Caco-2 (cell line): ENCODE measurements at regions of chr17 and their contacts with region 1.

Region 1: DNA sequence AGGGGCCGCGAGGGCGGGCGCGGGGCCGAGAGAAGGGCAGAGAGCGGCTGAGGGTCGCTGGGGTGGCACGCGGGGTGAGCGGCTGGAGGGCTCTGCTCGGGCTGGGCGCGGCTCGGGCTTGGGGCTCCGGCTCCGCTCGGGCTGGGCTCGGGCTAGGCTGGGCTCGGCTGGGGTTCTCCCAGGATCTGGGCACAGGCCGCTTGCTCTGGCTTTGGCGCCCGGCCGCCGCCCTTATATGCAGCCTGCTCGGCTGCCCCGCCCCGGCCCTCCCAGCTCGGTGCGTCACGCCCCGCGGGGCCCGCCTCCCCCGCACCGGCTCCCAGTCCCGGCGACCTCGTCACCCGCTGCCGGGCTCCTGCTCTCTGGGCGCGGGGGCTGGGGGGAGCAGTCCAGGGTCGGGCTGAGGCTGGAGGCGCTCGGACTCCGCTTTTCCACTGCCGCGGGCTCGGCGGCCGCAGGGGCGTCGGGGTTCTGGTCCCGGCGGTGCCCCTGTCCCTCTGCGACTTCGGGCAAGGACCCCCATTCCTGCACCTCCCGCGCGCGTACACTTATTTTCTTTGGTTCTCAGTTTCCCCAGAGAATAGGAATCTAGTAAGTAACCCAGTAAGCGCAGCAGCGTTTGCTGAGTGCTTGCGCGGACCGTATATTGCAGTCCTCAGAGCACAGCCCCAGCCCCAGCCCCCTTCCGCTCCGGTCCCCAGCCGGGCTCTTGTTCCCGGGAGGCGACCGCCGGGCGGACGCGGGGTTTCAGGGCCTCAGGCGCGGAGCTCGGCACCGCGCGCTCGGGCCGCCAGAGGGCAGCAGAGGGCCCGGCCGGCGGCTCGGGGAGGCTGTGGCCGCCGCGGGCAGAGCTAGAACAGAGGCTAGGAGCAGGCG is at the start of gene RASD1:
- DNase-seq: peak; percentile 88 to 96
- H3K4me3 ChIP-seq: peak within 1 kb of the TSS; percentile 91
- H3K4me3 Mint-ChIP-seq: peak within 1 kb of the TSS; percentile 92
- H3K27ac Mint-ChIP-seq: peak within 1 kb of the TSS; percentile 74
- H3K4me1 ChIP-seq: peaks cover 4% of the 10 kb centered on the region; the same call in 1 of the 2 replicates
- H3K4me1 Mint-ChIP-seq: peaks cover 12% of the 10 kb centered on the region
- H3K27me3 ChIP-seq: no peaks in the 10 kb centered on the region
- H3K27me3 Mint-ChIP-seq: no peaks in the 10 kb centered on the region
- CTCF ChIP-seq: peak; percentile 56 to 94
- total RNA-seq, gene RASD1: 11.0 and 14.8 TPM in 2 replicates

Region 2: GRCh38 chr17:17216776-17217175 is 279.7 kb before region 1 on chr17:
- CTCF ChIA-PET with region 1: no interaction called
- POLR2A ChIA-PET with region 1: no interaction called
- intact Hi-C with region 1: no loop called
- DNase-seq: no peak
- H3K4me3 ChIP-seq: no peak overlapping the region
- H3K4me3 Mint-ChIP-seq: no peak overlapping the region
- H3K27ac Mint-ChIP-seq: no peak overlapping the region
- H3K4me1 ChIP-seq: no peaks in the 10 kb centered on the region
- H3K4me1 Mint-ChIP-seq: no peaks in the 10 kb centered on the region
- H3K27me3 ChIP-seq: no peaks in the 10 kb centered on the region
- H3K27me3 Mint-ChIP-seq: no peaks in the 10 kb centered on the region
- CTCF ChIP-seq: no peak

Region 3: DNA sequence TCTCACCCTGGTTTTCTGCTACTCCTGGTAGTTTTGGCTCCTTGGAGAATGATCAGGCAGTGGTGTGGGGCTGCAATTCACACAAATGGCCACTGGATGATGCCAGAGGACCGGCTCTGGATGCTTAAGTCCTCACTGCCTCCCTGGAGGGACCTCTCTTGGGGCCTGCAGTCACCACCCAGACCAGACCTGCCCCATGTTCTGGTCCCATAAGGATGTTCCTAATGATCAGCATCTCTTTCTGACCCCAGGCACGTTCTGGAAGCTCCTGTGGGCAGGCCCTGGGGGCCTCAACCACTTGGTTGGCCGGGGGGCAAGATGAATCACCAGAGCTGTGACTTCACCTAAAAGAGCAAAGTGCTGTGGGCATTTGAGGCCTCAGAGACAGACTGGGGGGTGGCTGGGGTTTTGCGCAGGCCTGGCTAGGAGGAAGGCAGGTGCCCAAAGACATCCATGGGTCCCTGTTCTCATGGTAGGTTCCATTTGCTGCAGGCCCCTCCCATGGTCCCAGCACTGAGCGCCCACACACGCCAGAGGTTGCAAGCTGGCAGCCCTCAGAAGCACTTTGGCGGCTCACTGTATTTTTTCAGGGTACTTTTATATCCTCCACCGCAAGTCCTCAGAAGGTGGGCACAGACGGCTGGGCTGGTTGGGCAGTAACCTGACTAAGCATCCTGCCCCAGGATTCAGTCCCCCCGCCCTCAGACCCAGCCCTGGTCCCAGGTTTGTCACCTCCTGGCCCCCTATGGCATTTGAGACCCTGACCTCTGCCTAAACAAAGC is 140.1 kb before region 1 on chr17:
- CTCF ChIA-PET with region 1: interaction called, 20 read pairs
- POLR2A ChIA-PET with region 1: interaction called, 4 read pairs
- intact Hi-C with region 1: loop called (anchors 1 kb)
- DNase-seq: peak; percentile 83 to 87
- H3K4me3 ChIP-seq: no peak overlapping the region
- H3K4me3 Mint-ChIP-seq: no peak overlapping the region
- H3K27ac Mint-ChIP-seq: peak overlapping the region; percentile 40
- H3K4me1 ChIP-seq: peaks cover 5% of the 10 kb centered on the region; the same call in 1 of the 2 replicates
- H3K4me1 Mint-ChIP-seq: no peaks in the 10 kb centered on the region
- H3K27me3 ChIP-seq: no peaks in the 10 kb centered on the region
- H3K27me3 Mint-ChIP-seq: no peaks in the 10 kb centered on the region
- CTCF ChIP-seq: peak; percentile 99 to 100

Region 4: GRCh38 chr17:17387830-17388441 is 108.5 kb before region 1 on chr17:
- CTCF ChIA-PET with region 1: interaction called, 11 read pairs
- POLR2A ChIA-PET with region 1: no interaction called
- intact Hi-C with region 1: no loop called
- DNase-seq: peak; percentile 86 to 88
- H3K4me3 ChIP-seq: no peak overlapping the region
- H3K4me3 Mint-ChIP-seq: no peak overlapping the region
- H3K27ac Mint-ChIP-seq: no peak overlapping the region
- H3K4me1 ChIP-seq: peaks cover 12% of the 10 kb centered on the region
- H3K4me1 Mint-ChIP-seq: peaks cover 21% of the 10 kb centered on the region
- H3K27me3 ChIP-seq: no peaks in the 10 kb centered on the region
- H3K27me3 Mint-ChIP-seq: no peaks in the 10 kb centered on the region
- CTCF ChIP-seq: peak; percentile 78 to 94

Region 5: GRCh38 chr17:17476865-17477467 is 19.5 kb before region 1 on chr17 and contains the start of gene MED9:
- CTCF ChIA-PET with region 1: interaction called, 6 read pairs
- POLR2A ChIA-PET with region 1: interaction called, 3 read pairs
- intact Hi-C with region 1: loop called (anchors 2 kb)
- DNase-seq: peak; percentile 95 to 97
- H3K4me3 ChIP-seq: peak within 1 kb of the TSS; percentile 93
- H3K4me3 Mint-ChIP-seq: peak within 1 kb of the TSS; percentile 93
- H3K27ac Mint-ChIP-seq: peak within 1 kb of the TSS; percentile 97
- H3K4me1 ChIP-seq: peaks cover 12% of the 10 kb centered on the region; the same call in 1 of the 2 replicates
- H3K4me1 Mint-ChIP-seq: no peaks in the 10 kb centered on the region
- H3K27me3 ChIP-seq: no peaks in the 10 kb centered on the region; the same call in 1 of the 2 replicates
- H3K27me3 Mint-ChIP-seq: peaks cover 7% of the 10 kb centered on the region
- CTCF ChIP-seq: no peak
- total RNA-seq, gene MED9: 24.9 and 26.6 TPM in 2 replicates

Region 6: DNA sequence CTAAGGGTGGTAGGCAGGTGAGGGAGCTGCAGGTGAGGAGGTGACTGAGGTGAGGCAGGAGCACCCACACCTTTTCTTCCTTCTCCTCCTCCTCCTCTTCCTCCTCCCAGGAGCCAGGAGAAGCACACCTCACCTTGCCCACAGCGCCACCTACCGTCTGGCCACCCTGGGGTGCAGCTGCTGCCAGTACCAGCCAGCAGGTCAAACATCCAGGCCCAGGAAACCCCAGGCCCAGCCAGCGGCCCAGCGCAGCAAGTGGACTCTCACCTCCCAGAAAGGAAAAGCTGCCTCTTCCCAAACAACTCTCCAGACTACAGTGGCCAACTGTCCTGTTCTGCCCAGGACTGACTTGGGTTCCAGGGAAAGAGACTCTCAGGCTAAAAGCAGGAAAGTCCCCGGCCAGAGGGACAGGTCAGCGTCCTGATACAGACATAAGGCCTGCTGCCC is 72.3 kb after region 1 on chr17:
- CTCF ChIA-PET with region 1: interaction called, 52 read pairs
- POLR2A ChIA-PET with region 1: interaction called, 3 read pairs
- intact Hi-C with region 1: loop called (anchors 1 kb)
- DNase-seq: peak; percentile 85 to 92
- H3K4me3 ChIP-seq: no peak overlapping the region
- H3K4me3 Mint-ChIP-seq: no peak overlapping the region
- H3K27ac Mint-ChIP-seq: peak overlapping the region; percentile 76
- H3K4me1 ChIP-seq: peaks cover 17% of the 10 kb centered on the region
- H3K4me1 Mint-ChIP-seq: peaks cover 12% of the 10 kb centered on the region
- H3K27me3 ChIP-seq: no peaks in the 10 kb centered on the region
- H3K27me3 Mint-ChIP-seq: no peaks in the 10 kb centered on the region
- CTCF ChIP-seq: peak; percentile 93 to 95

Region 7: DNA sequence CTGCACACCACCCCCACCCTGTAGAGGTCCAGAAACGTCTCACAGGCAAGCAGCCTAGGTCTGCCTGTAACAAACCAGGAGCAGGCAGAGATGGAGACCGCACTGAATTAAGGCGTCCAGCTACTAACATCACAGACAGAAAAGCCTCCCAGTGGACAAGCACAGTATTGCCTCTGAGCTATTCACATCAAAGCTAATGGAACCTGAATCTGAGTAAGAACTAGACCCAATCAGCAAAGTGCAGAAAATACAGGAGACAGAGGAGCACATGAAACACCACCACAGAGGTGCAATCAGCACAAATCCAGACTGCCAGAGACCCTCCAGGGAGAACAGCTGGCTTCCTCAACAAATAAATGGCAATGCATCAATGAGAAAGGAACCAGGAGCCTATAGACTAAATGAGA is 117.3 kb after region 1 on chr17:
- CTCF ChIA-PET with region 1: interaction called, 28 read pairs
- POLR2A ChIA-PET with region 1: interaction called, 9 read pairs
- intact Hi-C with region 1: no loop called
- DNase-seq: peak; percentile 78 to 80
- H3K4me3 ChIP-seq: no peak overlapping the region
- H3K4me3 Mint-ChIP-seq: no peak overlapping the region
- H3K27ac Mint-ChIP-seq: no peak overlapping the region
- H3K4me1 ChIP-seq: no peaks in the 10 kb centered on the region
- H3K4me1 Mint-ChIP-seq: no peaks in the 10 kb centered on the region
- H3K27me3 ChIP-seq: no peaks in the 10 kb centered on the region
- H3K27me3 Mint-ChIP-seq: no peaks in the 10 kb centered on the region
- CTCF ChIP-seq: peak; percentile 55 to 86

Region 8: GRCh38 chr17:17681187-17681848 is 184.9 kb after region 1 on chr17 and contains the start of gene RAI1:
- CTCF ChIA-PET with region 1: no interaction called
- POLR2A ChIA-PET with region 1: interaction called, 18 read pairs
- intact Hi-C with region 1: no loop called
- DNase-seq: peak; percentile 72 to 88
- H3K4me3 ChIP-seq: peak within 1 kb of the TSS; percentile 96
- H3K4me3 Mint-ChIP-seq: peak within 1 kb of the TSS; percentile 90
- H3K27ac Mint-ChIP-seq: peak within 1 kb of the TSS; percentile 96
- H3K4me1 ChIP-seq: peaks cover 24% of the 10 kb centered on the region
- H3K4me1 Mint-ChIP-seq: peaks cover 27% of the 10 kb centered on the region
- H3K27me3 ChIP-seq: no peaks in the 10 kb centered on the region
- H3K27me3 Mint-ChIP-seq: no peaks in the 10 kb centered on the region
- CTCF ChIP-seq: peak; percentile 30 to 83
- total RNA-seq, gene RAI1: 44.3 and 46.7 TPM in 2 replicates